Head of caudate nucleus (tissue), 42 donors: ENCODE measurements at regions of chr19 and their contacts with region 1.

Region 1: DNA sequence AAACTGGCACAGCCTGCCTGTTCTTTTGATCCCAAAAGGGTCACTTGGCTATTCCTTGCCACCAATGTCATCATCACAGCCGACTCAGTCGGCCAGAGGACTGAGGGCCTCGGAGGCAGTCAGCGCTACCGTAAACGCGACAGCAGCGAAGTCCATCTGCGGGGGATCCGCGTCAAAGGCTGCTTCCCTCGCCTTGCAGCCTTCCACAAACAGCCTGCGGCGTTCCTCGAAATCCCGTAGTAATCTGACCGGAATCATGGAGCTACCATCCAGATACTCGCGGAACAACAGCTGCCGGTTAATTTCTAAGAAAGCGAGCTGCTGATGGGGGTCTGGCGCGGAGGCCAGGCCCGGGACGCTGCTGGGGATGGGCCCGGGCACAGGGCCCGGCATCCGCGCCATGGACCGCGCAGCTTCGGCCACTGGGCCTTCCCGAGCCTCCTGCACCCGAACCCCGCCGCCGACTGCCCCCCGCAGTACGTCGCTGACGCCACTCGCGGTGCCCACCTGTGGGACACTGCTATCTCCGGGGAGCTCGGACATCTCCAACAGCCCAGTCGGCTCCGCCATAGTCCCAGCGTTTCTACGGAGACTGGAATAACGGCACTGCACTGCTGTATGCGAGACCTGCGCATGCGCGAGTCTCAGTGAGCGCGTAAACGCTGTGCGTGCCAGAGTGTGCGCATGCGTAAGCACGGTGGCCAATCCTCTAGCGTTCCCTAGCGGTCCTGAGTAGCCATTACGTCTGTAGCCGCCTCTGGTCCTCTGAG is at the start of gene EID2B:
- DNase-seq: peak; percentile 83 to 97 (median 93)

Region 2: DNA sequence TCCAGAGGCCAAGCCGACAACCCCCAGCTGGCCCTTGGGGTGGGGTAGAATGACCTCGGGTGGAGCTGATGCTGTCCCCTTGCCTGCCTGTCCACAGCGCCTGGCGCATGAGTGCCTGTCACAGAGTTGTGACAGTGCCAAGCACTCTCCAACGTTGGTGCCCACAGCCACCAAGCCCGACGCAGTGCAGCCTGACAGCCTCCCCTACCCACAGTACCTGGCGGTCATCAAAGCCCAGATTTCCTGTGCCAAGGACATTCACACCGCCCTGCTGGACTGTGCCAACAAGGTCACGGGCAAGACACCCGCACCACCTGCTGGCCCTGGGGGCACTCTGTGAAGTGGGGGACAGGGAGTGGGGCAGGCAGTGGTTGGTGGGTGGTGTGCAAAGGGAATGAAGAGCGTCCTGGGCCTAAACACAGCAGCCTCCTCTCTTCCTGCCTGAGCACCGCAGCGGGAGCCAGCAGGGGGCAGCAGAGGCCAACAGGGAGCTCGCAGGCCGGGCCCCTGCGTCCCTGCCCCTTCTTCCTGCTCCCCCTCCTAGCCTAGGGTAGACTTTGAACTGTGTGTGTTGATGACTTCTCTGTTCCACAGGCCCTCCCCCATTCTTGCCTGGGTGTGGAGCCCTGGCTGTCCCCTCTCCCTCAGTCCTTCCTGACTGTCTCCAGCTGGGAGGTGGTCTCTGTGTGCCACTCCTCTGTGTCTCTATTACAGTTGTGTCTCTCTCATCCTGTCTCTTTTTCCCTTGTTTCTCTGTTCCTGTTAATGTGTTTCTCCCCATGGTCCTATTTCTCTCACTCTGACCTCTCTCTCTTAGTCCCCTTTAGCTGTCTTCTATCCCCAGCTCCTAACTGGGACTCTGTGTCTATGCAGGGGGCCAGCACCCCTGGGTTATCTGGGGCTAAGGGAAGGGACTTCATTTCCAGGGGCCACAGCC is 134.8 kb before region 1 on chr19:
- intact Hi-C with region 1: loop called (anchors 5 kb)
- DNase-seq: peak; percentile 70 to 94 (median 86)

Region 3: DNA sequence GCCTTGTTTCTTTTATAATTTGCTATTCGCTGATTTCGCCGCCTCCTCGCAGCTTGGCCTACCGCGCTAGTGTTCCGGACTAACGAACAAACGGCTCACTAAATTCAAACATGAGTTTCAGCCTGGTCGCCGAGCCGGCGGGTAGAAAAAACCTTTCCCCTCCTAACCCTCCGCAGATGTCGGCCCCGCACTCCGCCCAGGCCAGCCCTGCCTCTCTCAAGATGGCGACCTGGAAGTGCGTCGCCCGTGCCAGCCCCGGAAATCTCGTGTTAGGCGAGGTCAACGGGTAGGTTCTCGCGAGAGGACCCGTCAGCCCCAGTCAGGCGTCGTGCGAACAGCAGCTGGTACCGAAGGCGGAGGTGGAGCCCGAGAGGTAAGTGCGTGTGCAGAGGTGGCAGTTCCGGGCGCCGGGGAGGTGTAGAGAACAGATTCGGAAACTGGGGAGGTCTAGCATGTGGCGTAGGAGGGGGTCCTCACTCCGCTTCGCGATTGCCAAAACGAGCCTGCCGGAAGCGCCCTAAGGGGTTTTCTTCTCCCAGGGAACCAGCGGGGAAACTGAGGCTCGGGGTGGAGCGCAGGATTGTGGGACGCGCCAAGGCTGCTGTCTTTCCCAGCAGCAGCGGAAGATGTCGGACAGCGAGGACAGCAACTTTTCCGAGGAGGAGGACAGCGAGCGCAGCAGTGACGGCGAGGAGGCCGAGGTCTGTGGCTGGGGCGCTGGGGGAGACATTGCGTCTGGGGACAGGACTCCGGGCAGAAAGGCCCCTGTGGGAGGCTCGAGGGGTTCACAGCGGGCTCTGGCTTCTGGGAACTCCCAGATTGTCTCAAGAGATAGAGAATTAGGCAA is 86.9 kb before region 1 on chr19 and contains the start of gene SUPT5H:
- intact Hi-C with region 1: loop called (anchors 2 kb)
- DNase-seq: peak; percentile 90 to 98 (median 96)

Region 4: GRCh38 chr19:39474139-39474622 is 58.2 kb before region 1 on chr19:
- intact Hi-C with region 1: loop called (anchors 2 kb)
- DNase-seq: peak in 40 of 42 donors; percentile 21 to 85 (median 59)